ENCODE measurements at regions of chr12 and their contacts with region 1.

Region 1: DNA sequence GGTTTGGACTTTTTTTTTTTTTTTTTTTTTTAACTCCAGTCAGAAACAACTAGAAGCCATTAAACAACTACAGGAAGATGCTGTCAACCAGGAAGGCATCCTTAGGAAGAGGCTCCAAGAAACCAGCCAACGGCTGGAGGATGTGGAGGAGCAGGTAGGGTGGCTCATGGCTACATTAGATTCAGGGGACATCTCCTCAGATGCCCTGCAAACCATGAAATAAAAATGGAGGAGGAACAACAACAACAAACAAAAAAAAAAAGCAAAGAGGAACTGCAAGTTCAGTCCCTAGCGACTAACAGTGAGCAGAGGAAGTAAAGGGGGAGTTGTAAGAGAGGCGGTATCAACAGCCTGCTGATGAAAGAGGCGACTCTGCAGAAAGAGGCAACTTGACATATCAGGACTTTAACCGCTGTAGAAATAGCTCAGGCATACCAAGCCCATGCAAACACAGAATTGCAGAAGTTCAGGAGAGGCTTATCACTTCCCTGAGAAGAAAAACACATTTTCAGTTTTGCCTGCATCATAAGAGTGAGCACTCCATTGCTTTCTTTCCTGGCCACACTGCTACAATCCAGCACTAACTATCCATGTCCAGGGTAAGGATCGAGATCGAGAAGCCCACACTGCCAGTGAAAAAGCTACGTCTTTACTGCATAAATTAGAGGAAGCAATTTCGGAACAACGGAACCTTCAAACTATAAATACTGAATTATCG is 103.5 kb upstream of the BCAT1 start:
- DNase-seq: peak; percentile 44
- CTCF ChIP-seq: no peak

Region 2: GRCh38 chr12:24991209-24992049 is 60.9 kb before region 1 on chr12:
- in situ Hi-C with region 1: loop called (anchors 10 kb)
- DNase-seq: peak; percentile 57
- CTCF ChIP-seq: peak; percentile 58